Activated T-helper 1 cell treated with anti-CD3 and anti-CD28 coated beads, Interleukin-12 subunit alpha, Interleukin-12 subunit beta, Interleukin-2, Interleukin-4 antibody, amounts not matched to agents 30 ng/mL and 10 ng/mL and 1 ng/mL, durations not matched to agents 14 hours and 24 hours and 36 hours (primary cell): ENCODE measurements at regions of chr11 and their contacts with region 1.

Region 1: DNA sequence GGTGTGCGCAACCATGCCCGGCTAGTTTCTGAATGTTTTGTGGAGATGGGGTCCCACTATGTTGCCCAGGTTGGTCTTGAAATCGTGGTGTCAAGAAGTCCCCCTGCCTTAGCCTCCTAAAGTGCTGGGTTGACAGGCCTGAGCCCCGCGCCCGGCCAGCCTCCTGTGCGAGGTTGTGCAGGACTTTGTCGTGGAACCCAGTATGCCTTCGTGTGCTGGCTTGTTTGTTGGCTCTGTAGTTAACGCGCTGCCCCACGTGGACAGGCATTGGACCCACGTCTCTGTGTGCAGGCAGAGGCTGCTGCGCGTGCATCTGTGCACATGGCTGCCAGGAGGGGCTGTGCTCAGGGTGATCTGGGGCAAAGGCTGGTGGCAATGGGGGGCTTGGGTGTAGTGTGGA is 33.9 kb upstream of the ZNF195 start:
- DNase-seq: no peak
- H3K4me3 Mint-ChIP-seq: no peak overlapping the region
- H3K27ac Mint-ChIP-seq: no peak overlapping the region
- H3K4me1 Mint-ChIP-seq: no peaks in the 10 kb centered on the region
- H3K27me3 Mint-ChIP-seq: no peaks in the 10 kb centered on the region

Region 2: DNA sequence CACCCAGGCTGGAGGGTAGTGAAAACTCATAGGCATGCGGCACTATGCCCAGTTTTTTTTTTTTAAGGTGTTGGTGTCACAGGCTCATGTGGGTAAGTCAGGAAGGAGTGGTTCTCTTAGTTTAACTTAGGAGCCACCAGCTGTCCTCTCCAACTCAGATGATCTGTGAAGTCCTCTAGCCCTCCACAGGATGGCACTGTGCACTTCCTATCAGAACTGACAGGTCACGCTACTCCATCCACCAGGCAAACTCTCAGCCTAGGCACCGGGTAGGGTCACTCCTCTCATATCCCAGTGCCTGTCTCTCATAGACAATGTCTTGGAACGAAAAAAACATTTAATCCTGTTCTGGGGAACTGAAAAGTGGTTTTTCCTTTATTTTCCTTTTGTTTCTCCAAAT is 437.2 kb before region 1 on chr11:
- intact Hi-C with region 1: no loop called
- DNase-seq: peak; percentile 14
- H3K4me3 Mint-ChIP-seq: no peak overlapping the region
- H3K27ac Mint-ChIP-seq: no peak overlapping the region
- H3K4me1 Mint-ChIP-seq: peaks cover 29% of the 10 kb centered on the region
- H3K27me3 Mint-ChIP-seq: no peaks in the 10 kb centered on the region

Region 3: GRCh38 chr11:3231855-3232744 is 180.7 kb before region 1 on chr11 and contains the start of gene MRGPRE:
- intact Hi-C with region 1: no loop called
- DNase-seq: no peak
- H3K4me3 Mint-ChIP-seq: no peak within 1 kb of the TSS
- H3K27ac Mint-ChIP-seq: no peak within 1 kb of the TSS
- H3K4me1 Mint-ChIP-seq: no peaks in the 10 kb centered on the region
- H3K27me3 Mint-ChIP-seq: peaks cover 5% of the 10 kb centered on the region
- total RNA-seq, gene MRGPRE: not detected in 2 replicates

Region 4: GRCh38 chr11:3341298-3341697 is 71.5 kb before region 1 on chr11:
- intact Hi-C with region 1: loop called (anchors 5 kb)
- DNase-seq: peak; percentile 35
- H3K4me3 Mint-ChIP-seq: no peak overlapping the region
- H3K27ac Mint-ChIP-seq: no peak overlapping the region
- H3K4me1 Mint-ChIP-seq: no peaks in the 10 kb centered on the region
- H3K27me3 Mint-ChIP-seq: peaks cover 28% of the 10 kb centered on the region

Region 5: GRCh38 chr11:4032122-4032521 is 619.3 kb after region 1 on chr11:
- intact Hi-C with region 1: no loop called
- DNase-seq: no peak
- H3K4me3 Mint-ChIP-seq: no peak overlapping the region
- H3K27ac Mint-ChIP-seq: no peak overlapping the region
- H3K4me1 Mint-ChIP-seq: no peaks in the 10 kb centered on the region
- H3K27me3 Mint-ChIP-seq: no peaks in the 10 kb centered on the region